Adrenal gland (tissue), 19 donors: ENCODE measurements at regions of chr5 and their contacts with region 1.

Region 1: GRCh38 chr5:116574367-116575325 is at the start of gene SEMA6A:
- DNase-seq: peak; percentile 94 to 98 (median 95)
- H3K4me3 ChIP-seq: peak within 1 kb of the TSS; percentile 12 to 94 (median 90)
- H3K27ac ChIP-seq: peak within 1 kb of the TSS; percentile 62 to 93 (median 78)
- H3K4me1 ChIP-seq: peaks cover 14 to 18% of the 10 kb centered on the region in 2 donors
- H3K27me3 ChIP-seq: no peaks in the 10 kb centered on the region
- CTCF ChIP-seq: peak in 3 of 6 experiments; percentile 4 to 47 (median 29)
- POLR2A ChIP-seq: peak; percentile 97 to 98
- total RNA-seq, gene SEMA6A: 81.2 to 182 (median 136) TPM

Region 2: GRCh38 chr5:116502651-116503095 is 72.0 kb before region 1 on chr5:
- intact Hi-C with region 1: loop called in 1 of 2 experiments (anchors 10 kb)
- DNase-seq: peak; percentile 77 to 92 (median 89)
- H3K4me3 ChIP-seq: peak overlapping the region in 1 of 4 donors; percentile 0
- H3K27ac ChIP-seq: peak overlapping the region in 4 of 5 donors; percentile 46 to 77 (median 71)
- H3K4me1 ChIP-seq: peaks cover 36 to 70% of the 10 kb centered on the region in 2 donors
- H3K27me3 ChIP-seq: no peaks in the 10 kb centered on the region
- CTCF ChIP-seq: no peak
- POLR2A ChIP-seq: peak in 1 of 2 donors; percentile 51

Region 3: DNA sequence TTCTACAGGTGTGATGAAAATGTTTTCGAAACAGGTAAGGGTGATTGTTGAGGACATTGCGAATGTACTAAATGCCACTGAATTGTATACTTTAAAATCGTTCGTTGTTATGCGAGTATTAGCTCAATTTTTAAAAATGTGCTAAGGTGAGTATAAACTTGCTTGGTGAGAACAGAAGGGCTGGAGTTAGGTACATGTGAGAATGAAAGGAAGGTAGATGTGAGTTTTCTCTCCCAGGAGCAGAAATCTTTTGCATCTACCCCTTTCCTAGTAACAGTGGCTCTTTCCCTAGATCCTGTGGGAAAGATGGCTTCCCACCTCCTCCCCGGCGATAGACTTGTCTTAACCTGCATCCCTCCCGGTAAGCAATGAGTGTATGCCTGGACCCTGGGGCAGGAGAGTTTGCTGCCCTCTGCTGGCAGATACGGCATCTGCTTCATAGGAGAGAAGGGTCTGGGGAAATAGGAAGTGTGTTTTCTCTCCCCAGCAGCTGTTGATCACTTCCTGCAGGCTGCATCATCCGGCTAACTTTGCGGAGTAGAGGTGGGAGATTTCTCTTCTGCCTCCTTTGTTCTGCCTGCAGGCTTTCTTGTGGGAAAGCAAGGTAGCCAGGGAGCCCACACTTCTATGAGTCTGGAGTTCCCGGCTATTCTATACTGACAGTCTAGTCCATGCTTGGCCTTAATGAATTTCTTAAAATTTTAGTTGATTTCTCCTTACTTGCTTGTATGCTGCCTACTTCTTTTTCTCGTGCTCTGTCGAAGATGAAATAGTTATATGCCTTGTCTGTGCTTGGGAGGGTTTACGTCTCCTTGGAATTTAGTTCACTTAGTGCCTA is 373.3 kb after region 1 on chr5:
- intact Hi-C with region 1: loop called (anchors 5 to 10 kb)
- DNase-seq: peak; percentile 58 to 83 (median 73)
- H3K4me3 ChIP-seq: no peak overlapping the region
- H3K27ac ChIP-seq: no peak overlapping the region
- H3K4me1 ChIP-seq: no peaks in the 10 kb centered on the region
- H3K27me3 ChIP-seq: no peaks in the 10 kb centered on the region
- CTCF ChIP-seq: peak; percentile 57 to 76 (median 65)
- POLR2A ChIP-seq: no peak